ENCODE measurements at regions of chr1 and their contacts with region 1.

Region 1: GRCh38 chr1:45490626-45491486 is at the start of gene TESK2:
- DNase-seq: peak; percentile 100
- ATAC-seq: peak; percentile 94
- H3K4me3 ChIP-seq: peak within 1 kb of the TSS; percentile 83
- H3K27ac ChIP-seq: peak within 1 kb of the TSS; percentile 32; the same call in 1 of the 2 replicates
- H3K4me1 ChIP-seq: peaks cover 4% of the 10 kb centered on the region; the same call in 1 of the 2 replicates
- H3K27me3 ChIP-seq: no peaks in the 10 kb centered on the region
- CTCF ChIP-seq: peak in 1 of 3 experiments; percentile 14; a peak in 1 of 6 replicates
- EP300 ChIP-seq: no peak
- POLR2A ChIP-seq: peak; percentile 88
- RAD21 ChIP-seq: no peak
- polyA plus RNA-seq, gene TESK2: 2.2 to 2.5 TPM

Region 2: DNA sequence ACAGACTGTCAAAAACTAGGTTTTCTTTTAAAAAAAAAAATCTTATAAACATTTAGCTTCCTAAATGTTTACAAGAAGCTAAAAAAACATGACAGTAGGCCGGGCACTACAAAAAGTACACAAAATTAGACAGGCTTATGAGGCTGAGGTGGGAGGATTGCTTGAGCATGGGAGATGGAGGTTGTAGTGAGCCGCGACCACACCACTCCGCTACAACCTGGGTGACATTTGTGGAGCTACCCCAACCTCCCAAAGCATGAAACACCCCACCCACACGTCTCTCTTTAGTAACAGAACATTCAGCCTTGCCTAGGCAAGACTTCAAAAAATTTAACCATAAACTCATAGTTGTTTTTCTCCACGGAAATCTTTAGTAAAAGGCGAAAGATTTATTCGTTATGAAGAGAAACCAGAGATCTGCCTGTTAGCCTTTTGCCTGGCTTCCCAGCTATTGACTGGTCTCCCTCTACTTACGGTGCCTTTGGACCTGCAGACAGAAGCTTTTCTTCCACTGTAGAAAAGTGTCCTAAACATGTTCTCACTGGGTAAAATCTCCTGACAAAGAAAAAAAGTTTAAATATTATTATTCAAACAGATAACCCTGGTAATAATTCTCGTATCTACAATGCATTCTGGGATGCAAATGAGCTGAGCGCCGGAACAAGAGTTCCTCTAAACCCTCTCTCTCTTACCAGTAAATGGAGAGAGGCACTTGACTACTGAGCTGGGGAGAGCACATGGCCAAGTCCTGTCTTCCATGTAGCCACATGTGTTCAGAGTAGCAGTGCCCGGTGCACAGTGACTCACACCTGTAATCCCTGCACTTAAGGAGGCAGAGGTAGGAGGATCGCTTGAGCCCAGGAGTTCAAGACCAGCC is 769.1 kb before region 1 on chr1:
- CTCF ChIA-PET with region 1: interaction called, 3 read pairs
- POLR2A ChIA-PET with region 1: no interaction called
- RAD21 ChIA-PET with region 1: interaction called, 7 read pairs
- SMC1A ChIA-PET with region 1: no interaction called
- in situ Hi-C with region 1: no loop called
- intact Hi-C with region 1: loop called (anchors 5 kb)
- DNase-seq: peak; percentile 99
- ATAC-seq: peak; percentile 91
- H3K4me3 ChIP-seq: no peak overlapping the region
- H3K27ac ChIP-seq: peak overlapping the region; percentile 99
- H3K4me1 ChIP-seq: peaks cover 49% of the 10 kb centered on the region
- H3K27me3 ChIP-seq: no peaks in the 10 kb centered on the region
- CTCF ChIP-seq: peak in 1 of 3 experiments; percentile 16; a peak in 1 of 6 replicates
- EP300 ChIP-seq: no peak
- POLR2A ChIP-seq: peak; percentile 97
- RAD21 ChIP-seq: peak; percentile 18; the same call in 1 of the 2 replicates

Region 3: GRCh38 chr1:45018599-45019230 is 472.1 kb before region 1 on chr1:
- CTCF ChIA-PET with region 1: interaction called, 150 read pairs
- POLR2A ChIA-PET with region 1: no interaction called
- RAD21 ChIA-PET with region 1: interaction called, 93 read pairs
- SMC1A ChIA-PET with region 1: interaction called, 84 read pairs
- in situ Hi-C with region 1: loop called (anchors 5 kb)
- intact Hi-C with region 1: loop called (anchors 1 kb)
- DNase-seq: no peak
- ATAC-seq: peak; percentile 93
- H3K4me3 ChIP-seq: no peak overlapping the region
- H3K27ac ChIP-seq: no peak overlapping the region
- H3K4me1 ChIP-seq: no peaks in the 10 kb centered on the region
- H3K27me3 ChIP-seq: no peaks in the 10 kb centered on the region
- CTCF ChIP-seq: peak; percentile 71 to 87 (median 84)
- EP300 ChIP-seq: no peak
- POLR2A ChIP-seq: no peak
- RAD21 ChIP-seq: peak; percentile 87

Region 4: GRCh38 chr1:45348716-45349677 is 141.9 kb before region 1 on chr1:
- CTCF ChIA-PET with region 1: interaction called, 94 read pairs
- POLR2A ChIA-PET with region 1: interaction called, 5 read pairs
- RAD21 ChIA-PET with region 1: interaction called, 319 read pairs
- SMC1A ChIA-PET with region 1: interaction called, 23 read pairs
- in situ Hi-C with region 1: no loop called
- intact Hi-C with region 1: no loop called
- DNase-seq: no peak
- ATAC-seq: peak; percentile 37
- H3K4me3 ChIP-seq: no peak overlapping the region
- H3K27ac ChIP-seq: no peak overlapping the region
- H3K4me1 ChIP-seq: no peaks in the 10 kb centered on the region
- H3K27me3 ChIP-seq: no peaks in the 10 kb centered on the region
- CTCF ChIP-seq: no peak
- EP300 ChIP-seq: no peak
- POLR2A ChIP-seq: no peak
- RAD21 ChIP-seq: no peak

Region 5: DNA sequence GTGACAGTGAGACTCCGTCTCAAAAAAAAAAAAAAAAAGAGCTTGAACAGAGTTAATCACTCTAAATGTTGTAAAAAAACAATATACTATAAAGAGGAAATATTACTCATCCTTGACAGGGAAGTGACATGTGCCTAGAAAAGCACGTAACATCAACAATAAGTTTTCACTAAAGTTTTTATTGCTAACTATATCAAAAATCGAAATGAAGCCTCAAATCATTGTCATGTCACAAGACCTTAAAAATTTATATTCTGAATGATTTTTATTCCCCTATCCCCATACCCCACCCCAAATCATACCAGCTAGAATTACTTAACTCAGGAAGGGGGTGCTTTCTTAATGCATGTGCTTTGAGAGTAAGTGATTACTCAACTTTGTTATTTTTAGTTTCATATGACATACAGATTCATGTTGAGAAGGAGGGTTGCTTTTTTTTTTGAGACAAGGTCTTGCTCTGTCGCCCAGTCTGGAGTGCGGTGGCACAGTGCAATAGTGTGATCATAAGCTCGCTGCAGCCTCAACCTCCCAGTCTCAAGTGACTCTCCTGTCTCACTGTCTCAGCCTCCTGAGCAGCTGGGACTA is 97.0 kb before region 1 on chr1:
- CTCF ChIA-PET with region 1: interaction called, 10 read pairs
- POLR2A ChIA-PET with region 1: interaction called, 10 read pairs
- RAD21 ChIA-PET with region 1: interaction called, 12 read pairs
- SMC1A ChIA-PET with region 1: interaction called, 24 read pairs
- in situ Hi-C with region 1: no loop called
- intact Hi-C with region 1: no loop called
- DNase-seq: peak; percentile 49
- ATAC-seq: peak; percentile 94
- H3K4me3 ChIP-seq: no peak overlapping the region
- H3K27ac ChIP-seq: peak overlapping the region; percentile 90
- H3K4me1 ChIP-seq: peaks cover 22% of the 10 kb centered on the region
- H3K27me3 ChIP-seq: no peaks in the 10 kb centered on the region
- CTCF ChIP-seq: no peak
- EP300 ChIP-seq: 0 out of 4 replicates have a peak, but pooled peaks of 1 of the 2 experiments have one; percentile 9
- POLR2A ChIP-seq: 0 out of 2 replicates have a peak, but pooled peaks have one; percentile 29
- RAD21 ChIP-seq: no peak

Region 6: GRCh38 chr1:45569962-45570581 is 79.2 kb after region 1 on chr1:
- CTCF ChIA-PET with region 1: interaction called, 50 read pairs
- POLR2A ChIA-PET with region 1: interaction called, 3 read pairs
- RAD21 ChIA-PET with region 1: interaction called, 17 read pairs
- SMC1A ChIA-PET with region 1: interaction called, 15 read pairs
- in situ Hi-C with region 1: no loop called
- intact Hi-C with region 1: no loop called
- DNase-seq: no peak
- ATAC-seq: peak; percentile 97
- H3K4me3 ChIP-seq: no peak overlapping the region
- H3K27ac ChIP-seq: no peak overlapping the region
- H3K4me1 ChIP-seq: no peaks in the 10 kb centered on the region
- H3K27me3 ChIP-seq: no peaks in the 10 kb centered on the region
- CTCF ChIP-seq: peak; percentile 97 to 99 (median 98); a peak in 5 of 6 replicates
- EP300 ChIP-seq: no peak
- POLR2A ChIP-seq: 0 out of 2 replicates have a peak, but pooled peaks have one; percentile 14
- RAD21 ChIP-seq: peak; percentile 95

Region 7: DNA sequence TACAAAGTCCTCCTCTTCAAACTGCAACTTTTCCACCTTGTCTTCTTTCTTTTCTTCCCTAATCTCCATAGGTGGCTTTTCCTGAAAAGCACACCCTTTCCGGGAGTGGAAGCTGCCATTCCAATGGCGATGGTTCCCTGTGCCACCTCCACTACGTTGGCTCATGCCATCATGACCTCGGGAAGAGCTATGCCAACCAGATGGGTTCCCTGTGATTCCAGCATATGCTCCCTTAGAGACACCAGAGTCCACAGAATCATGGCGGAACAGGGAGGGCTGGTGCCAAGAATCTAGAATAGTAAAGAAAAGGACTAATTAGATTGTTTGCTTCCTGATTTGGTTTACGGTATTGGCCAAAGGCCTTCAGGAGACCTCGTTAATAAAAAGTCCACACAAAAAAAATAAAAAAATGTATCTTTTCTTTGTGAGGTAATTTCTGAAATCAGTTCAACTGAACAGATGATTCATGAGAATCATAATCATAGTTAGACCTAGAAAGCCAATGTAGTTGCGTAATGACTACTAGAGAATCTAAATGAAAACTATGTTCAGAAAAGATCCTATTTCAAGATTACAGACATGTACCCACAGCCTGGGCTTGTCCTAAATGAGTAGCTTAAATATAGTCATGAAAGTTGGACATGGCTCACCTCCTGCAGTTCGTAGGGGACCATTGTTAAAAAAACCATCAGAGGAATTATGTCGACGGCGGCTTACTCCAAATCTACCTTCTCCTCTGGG is 163.9 kb after region 1 on chr1:
- CTCF ChIA-PET with region 1: no interaction called
- POLR2A ChIA-PET with region 1: no interaction called
- RAD21 ChIA-PET with region 1: no interaction called
- SMC1A ChIA-PET with region 1: no interaction called
- in situ Hi-C with region 1: no loop called
- intact Hi-C with region 1: no loop called
- DNase-seq: no peak
- ATAC-seq: no peak
- H3K4me3 ChIP-seq: no peak overlapping the region
- H3K27ac ChIP-seq: no peak overlapping the region
- H3K4me1 ChIP-seq: no peaks in the 10 kb centered on the region
- H3K27me3 ChIP-seq: no peaks in the 10 kb centered on the region
- CTCF ChIP-seq: no peak
- EP300 ChIP-seq: no peak
- POLR2A ChIP-seq: no peak
- RAD21 ChIP-seq: no peak

Region 8: GRCh38 chr1:45704637-45705036 is 213.8 kb after region 1 on chr1:
- CTCF ChIA-PET with region 1: no interaction called
- POLR2A ChIA-PET with region 1: no interaction called
- RAD21 ChIA-PET with region 1: no interaction called
- SMC1A ChIA-PET with region 1: no interaction called
- in situ Hi-C with region 1: no loop called
- intact Hi-C with region 1: no loop called
- DNase-seq: no peak
- ATAC-seq: no peak
- H3K4me3 ChIP-seq: no peak overlapping the region
- H3K27ac ChIP-seq: no peak overlapping the region
- H3K4me1 ChIP-seq: no peaks in the 10 kb centered on the region
- H3K27me3 ChIP-seq: no peaks in the 10 kb centered on the region
- CTCF ChIP-seq: no peak
- EP300 ChIP-seq: no peak
- POLR2A ChIP-seq: no peak
- RAD21 ChIP-seq: no peak